GM13977 (cell line): ENCODE measurements at regions of chr16 and their contacts with region 1.

Region 1: DNA sequence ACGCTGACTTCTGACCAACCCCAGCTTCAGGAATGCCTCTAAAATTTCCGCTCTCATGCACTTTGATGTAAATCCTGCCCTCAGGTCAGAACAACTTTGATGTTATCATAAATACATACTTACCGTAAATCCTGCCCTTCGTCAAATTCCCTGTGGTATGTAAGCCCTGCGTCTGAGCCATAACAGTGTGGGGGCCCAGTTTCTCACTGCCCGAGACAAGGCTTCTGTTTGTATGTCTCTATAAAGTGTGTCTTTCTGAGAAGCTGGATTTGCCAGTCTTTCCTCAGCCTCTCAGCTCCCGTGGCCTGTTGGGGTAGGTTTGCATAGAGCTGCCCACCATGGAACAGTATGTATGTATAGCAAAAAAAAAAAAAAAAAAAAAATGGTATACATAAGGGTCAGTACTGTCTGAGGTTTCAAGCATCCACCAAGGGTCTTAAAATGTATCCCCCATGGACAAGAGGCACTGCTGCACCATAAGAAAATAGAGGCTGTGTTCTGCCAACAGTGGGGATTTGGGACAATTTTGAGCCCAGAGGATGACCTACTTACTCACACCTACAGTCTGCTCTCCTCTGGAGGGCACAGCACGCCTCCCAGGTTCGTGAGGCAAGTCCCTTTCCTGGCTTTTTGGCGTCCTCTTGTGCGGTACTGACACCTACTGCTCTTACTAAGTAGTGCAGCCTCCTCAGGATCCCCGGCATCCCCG is 17.5 kb downstream of the PRMT7 start:
- DNase-seq: peak; percentile 82
- CTCF ChIP-seq: peak; percentile 94

Region 2: DNA sequence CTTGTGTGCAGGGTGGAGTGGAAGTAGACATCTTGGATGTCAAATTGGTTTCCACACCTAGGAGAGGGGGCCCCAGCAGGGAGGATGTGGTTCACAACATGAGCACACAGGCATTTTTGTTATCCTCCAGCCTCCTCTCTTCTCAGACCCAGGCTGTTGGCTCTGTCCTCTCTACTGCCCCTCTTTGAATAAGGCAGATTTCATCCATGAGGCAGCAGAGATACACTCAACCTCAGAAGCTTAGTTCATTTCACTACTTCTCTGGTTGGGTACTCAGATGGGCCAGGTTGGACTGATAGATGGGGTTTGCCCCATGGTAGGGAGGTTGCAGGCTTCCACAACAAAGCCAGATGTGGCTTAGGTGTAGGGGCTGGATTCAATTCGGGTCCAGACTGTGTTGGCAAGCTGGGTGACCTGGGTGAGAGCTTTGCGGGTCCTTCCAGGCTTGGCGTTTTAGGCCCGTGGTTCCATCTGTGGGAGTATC is 265.4 kb before region 1 on chr16:
- in situ Hi-C with region 1: no loop called
- DNase-seq: no peak
- CTCF ChIP-seq: no peak

Region 3: GRCh38 chr16:68264128-68265077 is 63.9 kb before region 1 on chr16 and contains the start of gene SLC7A6:
- in situ Hi-C with region 1: loop called (anchors 5 kb)
- DNase-seq: peak; percentile 90
- CTCF ChIP-seq: peak; percentile 89

Region 4: GRCh38 chr16:68823401-68824135 is 495.3 kb after region 1 on chr16:
- in situ Hi-C with region 1: no loop called
- DNase-seq: no peak
- CTCF ChIP-seq: no peak

Region 5: DNA sequence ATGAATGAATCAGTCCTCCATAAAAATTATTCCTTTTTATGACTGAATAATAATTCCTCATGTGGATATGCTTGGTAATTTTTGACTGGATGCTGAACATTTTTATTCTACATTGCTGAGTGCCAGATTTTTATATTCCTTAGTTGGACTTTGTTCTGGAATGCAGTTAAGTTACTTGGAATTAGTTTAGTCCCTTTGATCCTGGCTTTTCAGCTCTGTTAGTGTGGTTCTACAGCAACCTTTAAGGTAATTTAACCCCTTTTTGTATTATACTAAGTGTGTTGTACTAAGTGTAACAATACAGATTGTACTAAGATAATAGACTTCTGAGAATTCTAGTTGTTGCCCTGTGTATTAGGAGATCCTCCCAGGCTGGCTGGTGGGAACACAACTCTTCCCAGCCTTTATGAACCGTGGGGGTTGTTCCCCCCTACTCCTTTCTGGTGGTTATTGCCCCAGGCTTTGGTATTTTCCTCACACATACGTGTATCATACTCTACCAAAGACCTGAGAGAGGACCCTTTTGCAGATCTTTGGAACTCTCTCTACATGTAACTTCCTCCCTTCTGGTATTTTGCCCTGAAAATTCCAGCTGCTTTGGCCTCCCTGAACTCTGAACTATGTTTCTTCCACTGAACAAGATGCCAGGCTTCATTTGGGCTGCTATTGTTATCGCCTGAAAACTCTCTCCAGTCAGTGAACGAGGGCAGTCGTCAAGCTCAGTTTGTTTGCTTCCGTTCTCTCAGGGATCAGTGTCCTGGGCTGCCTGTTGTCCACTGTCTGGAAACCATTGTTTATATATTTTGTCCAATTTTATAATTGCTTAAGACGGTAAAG is 545.5 kb after region 1 on chr16:
- in situ Hi-C with region 1: no loop called
- DNase-seq: no peak
- CTCF ChIP-seq: no peak